IMR-90 (cell line): ENCODE measurements at regions of chr4 and their contacts with region 1.

Region 1: DNA sequence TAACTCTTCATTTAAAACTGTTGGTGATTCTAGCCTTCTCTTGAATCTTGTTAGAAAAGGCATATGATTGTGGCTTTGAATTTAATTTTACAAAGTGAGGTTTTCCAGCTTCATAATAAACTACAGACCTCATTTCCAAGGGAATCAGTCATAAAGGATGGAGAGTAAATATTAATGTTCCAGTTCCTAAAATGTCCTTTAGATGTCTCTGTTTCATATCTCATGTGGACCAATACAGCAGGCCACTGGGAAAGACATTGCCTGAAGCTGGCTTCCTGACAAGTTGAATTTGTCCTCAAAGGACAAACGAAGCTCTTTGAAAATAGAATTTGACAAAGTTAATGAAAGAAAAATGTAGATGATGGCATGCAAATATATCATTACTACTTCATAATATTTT is 125.4 kb downstream of the ZNF330 start:
- DNase-seq: peak; percentile 74
- ATAC-seq: peak; percentile 69
- H3K4me3 ChIP-seq: no peak overlapping the region
- H3K27ac ChIP-seq: no peak overlapping the region
- H3K4me1 ChIP-seq: peaks cover 7% of the 10 kb centered on the region
- H3K27me3 ChIP-seq: no peaks in the 10 kb centered on the region
- CTCF ChIP-seq: peak; percentile 74
- POLR2A ChIP-seq: no peak
- RAD21 ChIP-seq: peak; percentile 87

Region 2: DNA sequence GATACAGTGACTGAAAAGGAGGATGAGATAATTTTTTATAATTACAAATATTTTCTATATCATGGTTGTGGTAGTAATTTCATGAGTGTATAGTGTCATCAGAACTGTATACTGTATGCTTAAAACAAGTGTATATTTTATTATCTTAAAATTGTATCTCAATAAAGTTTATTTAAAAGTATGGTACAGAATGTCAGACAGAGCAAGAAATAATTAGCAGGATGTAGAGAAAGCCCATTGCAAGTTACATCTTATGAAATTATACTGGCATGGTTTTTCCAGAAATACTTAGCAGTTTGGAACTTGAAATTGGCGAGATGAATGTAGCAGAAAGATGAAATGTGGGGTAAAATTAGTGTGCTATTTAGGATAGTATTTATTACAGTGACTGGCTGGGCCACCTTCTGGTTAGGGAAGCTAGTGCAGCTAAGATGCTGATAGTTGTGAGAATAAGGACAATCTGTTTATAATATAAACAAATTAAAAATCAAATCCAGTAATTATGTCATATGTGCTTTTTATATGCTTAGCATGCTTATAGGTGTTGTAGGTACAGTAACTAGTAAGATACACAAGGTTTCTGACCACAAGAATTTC is 365.0 kb after region 1 on chr4:
- CTCF ChIA-PET with region 1: interaction called, 6 read pairs
- POLR2A ChIA-PET with region 1: no interaction called
- dilution Hi-C with region 1: no loop called
- in situ Hi-C with region 1: no loop called
- intact Hi-C with region 1: loop called (anchors 2 kb)
- DNase-seq: peak; percentile 51
- ATAC-seq: peak; percentile 63; the same call in 1 of the 2 replicates
- H3K4me3 ChIP-seq: no peak overlapping the region
- H3K27ac ChIP-seq: no peak overlapping the region
- H3K4me1 ChIP-seq: peaks cover 9% of the 10 kb centered on the region
- H3K27me3 ChIP-seq: no peaks in the 10 kb centered on the region
- CTCF ChIP-seq: peak; percentile 70
- POLR2A ChIP-seq: no peak
- RAD21 ChIP-seq: peak; percentile 72

Region 3: GRCh38 chr4:141826260-141826659 is 480.1 kb after region 1 on chr4:
- CTCF ChIA-PET with region 1: no interaction called
- POLR2A ChIA-PET with region 1: no interaction called
- dilution Hi-C with region 1: no loop called
- in situ Hi-C with region 1: no loop called
- intact Hi-C with region 1: loop called (anchors 5 kb)
- DNase-seq: peak; percentile 81
- ATAC-seq: peak; percentile 71
- H3K4me3 ChIP-seq: no peak overlapping the region
- H3K27ac ChIP-seq: no peak overlapping the region
- H3K4me1 ChIP-seq: no peaks in the 10 kb centered on the region; the same call in 1 of the 2 replicates
- H3K27me3 ChIP-seq: no peaks in the 10 kb centered on the region
- CTCF ChIP-seq: no peak
- POLR2A ChIP-seq: no peak
- RAD21 ChIP-seq: no peak

Region 4: GRCh38 chr4:142120921-142121320 is 774.8 kb after region 1 on chr4:
- CTCF ChIA-PET with region 1: no interaction called
- POLR2A ChIA-PET with region 1: no interaction called
- dilution Hi-C with region 1: no loop called
- in situ Hi-C with region 1: loop called (anchors 25 kb)
- intact Hi-C with region 1: loop called (anchors 2 kb)
- DNase-seq: no peak
- ATAC-seq: no peak
- H3K4me3 ChIP-seq: no peak overlapping the region
- H3K27ac ChIP-seq: no peak overlapping the region
- H3K4me1 ChIP-seq: no peaks in the 10 kb centered on the region; the same call in 1 of the 2 replicates
- H3K27me3 ChIP-seq: no peaks in the 10 kb centered on the region
- CTCF ChIP-seq: no peak
- POLR2A ChIP-seq: no peak
- RAD21 ChIP-seq: no peak

Region 5: GRCh38 chr4:142265536-142265935 is 919.4 kb after region 1 on chr4:
- CTCF ChIA-PET with region 1: no interaction called
- POLR2A ChIA-PET with region 1: no interaction called
- dilution Hi-C with region 1: no loop called
- in situ Hi-C with region 1: no loop called
- intact Hi-C with region 1: loop called (anchors 10 kb)
- DNase-seq: peak; percentile 75
- ATAC-seq: peak; percentile 47
- H3K4me3 ChIP-seq: no peak overlapping the region
- H3K27ac ChIP-seq: peak overlapping the region; percentile 93; the same call in 1 of the 2 replicates
- H3K4me1 ChIP-seq: peaks cover 23% of the 10 kb centered on the region
- H3K27me3 ChIP-seq: no peaks in the 10 kb centered on the region
- CTCF ChIP-seq: no peak
- POLR2A ChIP-seq: no peak
- RAD21 ChIP-seq: no peak

Region 6: GRCh38 chr4:142846729-142847596 is 1500.8 kb after region 1 on chr4:
- CTCF ChIA-PET with region 1: no interaction called
- POLR2A ChIA-PET with region 1: no interaction called
- dilution Hi-C with region 1: no loop called
- in situ Hi-C with region 1: loop called (anchors 25 kb)
- intact Hi-C with region 1: no loop called
- DNase-seq: no peak
- ATAC-seq: peak; percentile 19; the same call in 1 of the 2 replicates
- H3K4me3 ChIP-seq: peak overlapping the region; percentile 61
- H3K27ac ChIP-seq: peak overlapping the region; percentile 25; the same call in 1 of the 2 replicates
- H3K4me1 ChIP-seq: no peaks in the 10 kb centered on the region
- H3K27me3 ChIP-seq: peaks cover 10% of the 10 kb centered on the region
- CTCF ChIP-seq: no peak
- POLR2A ChIP-seq: no peak
- RAD21 ChIP-seq: no peak